ENCODE measurements at regions of chr5 and their contacts with region 1.

Region 1: DNA sequence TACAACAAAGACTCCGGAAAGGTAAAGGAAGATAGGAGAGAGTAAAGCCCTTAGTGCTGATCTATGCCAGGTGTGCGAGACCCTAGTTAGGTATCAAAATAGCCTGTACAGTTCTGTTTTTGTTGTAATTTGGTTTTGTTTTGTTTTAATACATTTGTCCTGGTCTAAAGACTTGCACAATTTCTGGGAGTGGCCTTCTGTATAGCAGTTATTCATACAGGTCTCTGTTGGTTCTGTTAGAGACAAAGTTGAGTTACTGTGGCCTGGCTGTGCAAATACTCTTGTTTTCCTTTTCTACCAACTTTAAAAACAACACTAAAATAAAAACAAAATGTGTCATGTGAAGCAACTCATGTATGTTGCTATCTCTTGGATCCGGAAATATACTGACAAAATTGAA is 163.6 kb downstream of the COMMD10 start:
- DNase-seq: no peak
- ATAC-seq: no peak
- H3K4me3 ChIP-seq: no peak overlapping the region
- H3K4me3 Mint-ChIP-seq: no peak overlapping the region
- H3K27ac ChIP-seq: no peak overlapping the region
- H3K27ac Mint-ChIP-seq: no peak overlapping the region
- H3K4me1 ChIP-seq: no peaks in the 10 kb centered on the region
- H3K4me1 Mint-ChIP-seq: no peaks in the 10 kb centered on the region
- H3K27me3 ChIP-seq: no peaks in the 10 kb centered on the region
- H3K27me3 Mint-ChIP-seq: no peaks in the 10 kb centered on the region
- CTCF ChIP-seq: no peak

Region 2: GRCh38 chr5:116068028-116068632 is 180.3 kb before region 1 on chr5:
- CTCF ChIA-PET with region 1: no interaction called
- POLR2A ChIA-PET with region 1: no interaction called
- intact Hi-C with region 1: no loop called
- DNase-seq: peak in 5 of 14 experiments; percentile 6 to 78 (median 56)
- ATAC-seq: peak; percentile 58
- H3K4me3 ChIP-seq: no peak overlapping the region
- H3K4me3 Mint-ChIP-seq: no peak overlapping the region
- H3K27ac ChIP-seq: no peak overlapping the region
- H3K27ac Mint-ChIP-seq: no peak overlapping the region
- H3K4me1 ChIP-seq: no peaks in the 10 kb centered on the region
- H3K4me1 Mint-ChIP-seq: no peaks in the 10 kb centered on the region
- H3K27me3 ChIP-seq: peaks cover 0 to 17% of the 10 kb centered on the region in 2 experiments
- H3K27me3 Mint-ChIP-seq: peaks cover 30% of the 10 kb centered on the region
- CTCF ChIP-seq: peak; percentile 74

Region 3: DNA sequence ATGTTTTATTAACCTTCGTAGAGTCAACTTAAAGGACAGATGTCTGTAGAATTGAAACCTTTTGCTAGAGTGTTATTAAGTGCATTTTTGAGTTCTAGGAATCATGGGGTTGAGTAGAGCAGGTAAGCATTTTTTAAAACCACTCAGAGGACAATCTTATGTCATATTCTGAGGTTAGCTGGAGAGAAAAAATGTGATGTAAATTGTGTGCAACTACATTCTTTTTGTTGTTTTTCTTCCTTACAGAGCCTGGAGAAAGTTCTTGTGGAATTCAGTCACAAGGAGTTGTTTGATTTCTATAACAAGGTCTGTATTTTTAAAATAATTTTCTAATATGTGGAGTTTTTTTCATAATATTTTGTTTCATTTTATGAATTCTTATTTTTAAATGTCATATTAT is 42.8 kb after region 1 on chr5:
- CTCF ChIA-PET with region 1: no interaction called
- POLR2A ChIA-PET with region 1: no interaction called
- intact Hi-C with region 1: loop called (anchors 2 to 5 kb)
- DNase-seq: no peak
- ATAC-seq: no peak
- H3K4me3 ChIP-seq: no peak overlapping the region
- H3K4me3 Mint-ChIP-seq: no peak overlapping the region
- H3K27ac ChIP-seq: no peak overlapping the region
- H3K27ac Mint-ChIP-seq: no peak overlapping the region
- H3K4me1 ChIP-seq: no peaks in the 10 kb centered on the region
- H3K4me1 Mint-ChIP-seq: no peaks in the 10 kb centered on the region
- H3K27me3 ChIP-seq: no peaks in the 10 kb centered on the region
- H3K27me3 Mint-ChIP-seq: no peaks in the 10 kb centered on the region
- CTCF ChIP-seq: no peak

Measured in CD4-positive, alpha-beta T cell (primary cell).